Activated CD4-positive, alpha-beta memory T cell treated with anti-CD3 and anti-CD28 coated beads for 36 hours (primary cell): ENCODE measurements at regions of chr12 and their contacts with region 1.

Region 1: DNA sequence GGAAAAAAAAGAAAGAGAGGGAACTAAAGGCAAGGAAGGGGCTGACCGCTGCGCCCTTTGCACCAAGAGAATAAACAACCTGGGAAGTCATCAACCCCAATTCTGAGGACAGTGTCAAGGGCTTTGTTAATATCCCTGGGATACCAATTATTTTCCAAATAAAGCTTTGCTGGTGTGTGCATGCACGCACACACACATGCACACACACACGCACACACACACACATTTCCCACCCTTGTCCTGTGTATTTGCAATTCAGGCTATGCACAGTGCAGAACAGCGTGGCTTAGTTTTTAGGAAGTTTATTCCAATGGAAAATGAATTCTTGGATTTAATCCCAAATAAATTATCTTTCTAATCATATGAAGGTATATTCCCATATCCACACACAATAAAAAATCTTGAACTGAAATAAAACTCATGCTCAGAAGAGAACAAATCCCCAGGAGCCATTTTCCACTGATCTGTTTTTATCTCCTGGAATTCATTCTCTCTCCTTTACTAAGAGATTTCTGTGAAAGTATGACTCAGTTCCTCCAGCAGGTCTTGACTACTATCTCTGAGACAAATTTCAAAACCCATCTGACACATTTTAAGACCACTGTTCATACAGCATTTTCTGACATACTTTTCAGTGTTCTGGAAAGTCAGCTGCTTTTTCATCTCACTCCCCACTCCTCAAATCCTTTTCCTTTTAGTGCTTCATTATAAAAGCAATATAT is 334.4 kb upstream of the ATP2B1 start:
- DNase-seq: no peak
- H3K4me3 Mint-ChIP-seq: no peak overlapping the region
- H3K27ac Mint-ChIP-seq: no peak overlapping the region
- H3K4me1 Mint-ChIP-seq: peaks cover 9% of the 10 kb centered on the region
- H3K27me3 Mint-ChIP-seq: no peaks in the 10 kb centered on the region

Region 2: DNA sequence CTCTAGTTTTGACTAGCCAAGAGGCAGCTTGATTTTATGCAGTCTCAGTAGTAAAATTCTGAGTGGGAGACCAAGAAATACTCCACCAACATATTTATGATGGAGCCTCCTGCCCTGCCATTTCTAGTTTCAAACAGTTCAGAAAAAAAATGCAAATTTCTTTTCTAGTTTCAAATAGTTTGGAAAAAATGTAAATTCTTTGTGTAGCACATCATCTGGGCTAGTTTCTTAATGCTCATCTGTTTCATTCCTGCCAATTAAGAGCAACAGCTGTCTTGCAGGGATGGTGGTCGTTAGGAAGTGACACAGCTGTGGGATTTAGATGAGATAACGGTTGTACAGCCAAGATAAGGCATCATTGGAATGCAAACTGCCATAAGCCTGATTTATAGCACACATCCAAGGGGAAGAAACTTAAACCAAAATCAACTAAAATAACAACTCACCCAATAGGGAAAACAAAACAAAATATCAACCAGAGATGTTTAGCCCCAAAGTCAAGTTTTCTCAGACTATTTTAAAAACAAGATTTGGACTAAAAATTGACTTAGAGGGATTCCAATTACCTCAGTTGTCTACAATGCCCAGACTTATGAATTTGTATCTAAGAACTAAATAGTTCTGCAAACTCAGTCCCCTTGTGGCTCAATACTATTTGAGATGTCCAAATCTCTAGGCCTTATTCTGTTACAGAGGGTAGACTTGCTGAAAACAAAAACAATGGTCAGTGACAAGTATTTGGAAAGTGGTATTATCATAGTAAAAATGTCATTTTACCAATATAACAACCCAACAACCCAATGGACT is 43.2 kb before region 1 on chr12:
- CTCF ChIA-PET with region 1: no interaction called
- POLR2A ChIA-PET with region 1: no interaction called
- intact Hi-C with region 1: no loop called
- DNase-seq: no peak
- H3K4me3 Mint-ChIP-seq: no peak overlapping the region
- H3K27ac Mint-ChIP-seq: no peak overlapping the region
- H3K4me1 Mint-ChIP-seq: no peaks in the 10 kb centered on the region
- H3K27me3 Mint-ChIP-seq: no peaks in the 10 kb centered on the region

Region 3: DNA sequence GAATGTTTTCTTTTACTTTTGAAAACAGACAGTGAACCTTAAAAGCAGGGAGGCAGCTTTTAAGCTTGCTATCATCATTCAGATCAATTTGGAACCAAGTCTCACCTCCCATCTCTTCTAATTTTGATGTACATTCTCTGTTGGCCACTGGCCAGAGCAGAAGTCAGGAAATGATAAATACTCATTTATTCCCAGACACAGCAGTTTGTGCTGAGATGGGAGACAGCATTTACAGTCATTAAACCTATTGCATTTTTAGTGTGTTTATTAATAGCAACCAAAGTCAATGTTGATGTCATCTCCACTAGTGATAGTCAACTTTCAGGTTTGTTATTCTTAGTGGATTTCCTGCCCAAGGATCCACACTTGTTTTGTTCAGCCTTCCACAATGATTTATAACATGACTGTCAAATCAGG is 14.4 kb before region 1 on chr12:
- CTCF ChIA-PET with region 1: no interaction called
- POLR2A ChIA-PET with region 1: interaction called, 3 read pairs
- intact Hi-C with region 1: loop called (anchors 1 kb)
- DNase-seq: no peak
- H3K4me3 Mint-ChIP-seq: no peak overlapping the region
- H3K27ac Mint-ChIP-seq: no peak overlapping the region
- H3K4me1 Mint-ChIP-seq: peaks cover 16% of the 10 kb centered on the region
- H3K27me3 Mint-ChIP-seq: no peaks in the 10 kb centered on the region

Region 4: GRCh38 chr12:90076851-90077319 is 33.8 kb after region 1 on chr12:
- CTCF ChIA-PET with region 1: no interaction called
- POLR2A ChIA-PET with region 1: no interaction called
- intact Hi-C with region 1: loop called (anchors 5 kb)
- DNase-seq: no peak
- H3K4me3 Mint-ChIP-seq: no peak overlapping the region
- H3K27ac Mint-ChIP-seq: peak overlapping the region; percentile 21
- H3K4me1 Mint-ChIP-seq: peaks cover 31% of the 10 kb centered on the region
- H3K27me3 Mint-ChIP-seq: no peaks in the 10 kb centered on the region